ENCODE measurements at regions of chr7 and their contacts with region 1.

Region 1: DNA sequence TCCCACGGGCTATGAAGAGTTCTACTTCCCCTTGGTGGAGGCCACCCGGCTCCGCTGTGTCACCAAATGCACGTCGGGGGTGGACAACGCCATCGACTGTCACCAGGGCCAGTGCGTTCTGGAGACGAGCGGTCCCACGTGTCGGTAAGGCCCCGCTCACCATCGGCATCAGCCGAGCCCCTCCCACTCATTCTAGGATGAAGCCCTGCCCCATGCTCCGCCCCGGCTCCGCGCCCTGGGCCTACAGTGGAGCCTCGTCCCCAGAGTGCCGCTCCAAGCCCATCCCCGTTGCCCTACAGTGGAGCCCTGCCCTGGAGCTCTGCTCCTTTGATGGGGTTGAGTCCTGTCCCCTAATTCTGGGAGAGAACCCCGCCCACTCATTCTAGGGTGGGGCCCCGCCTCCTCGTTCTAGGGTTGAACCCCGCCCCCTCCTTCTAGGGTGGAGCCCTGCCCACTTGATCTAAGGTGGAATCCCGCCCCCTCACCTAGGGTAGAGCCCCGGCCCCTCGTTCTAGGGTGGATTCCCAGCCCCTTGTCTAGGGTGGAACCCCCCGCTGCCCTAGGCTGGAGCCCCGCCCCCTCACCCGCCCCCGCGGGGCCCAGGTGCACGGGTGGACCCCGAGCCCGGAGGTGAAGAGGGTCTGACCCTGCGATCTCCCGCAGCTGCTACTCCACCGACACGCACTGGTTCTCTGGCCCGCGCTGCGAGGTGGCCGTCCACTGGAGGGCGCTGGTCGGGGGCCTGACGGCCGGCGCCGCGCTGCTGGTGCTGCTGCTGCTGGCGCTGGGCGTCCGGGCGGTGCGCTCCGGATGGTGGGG is 3.4 kb upstream of the MUC12 start:
- DNase-seq: peak; percentile 64
- H3K4me3 Mint-ChIP-seq: peak overlapping the region; percentile 70
- H3K27ac Mint-ChIP-seq: no peak overlapping the region
- H3K4me1 Mint-ChIP-seq: peaks cover 8% of the 10 kb centered on the region
- H3K27me3 Mint-ChIP-seq: peaks cover 48% of the 10 kb centered on the region

Region 2: GRCh38 chr7:100803398-100804233 is 162.3 kb before region 1 on chr7:
- intact Hi-C with region 1: loop called (anchors 5 kb)
- DNase-seq: peak; percentile 42
- H3K4me3 Mint-ChIP-seq: no peak overlapping the region
- H3K27ac Mint-ChIP-seq: peak overlapping the region; percentile 71
- H3K4me1 Mint-ChIP-seq: peaks cover 10% of the 10 kb centered on the region
- H3K27me3 Mint-ChIP-seq: peaks cover 13% of the 10 kb centered on the region

Region 3: GRCh38 chr7:100889761-100890634 is 75.9 kb before region 1 on chr7:
- intact Hi-C with region 1: loop called (anchors 5 kb)
- DNase-seq: peak; percentile 91
- H3K4me3 Mint-ChIP-seq: peak overlapping the region; percentile 82
- H3K27ac Mint-ChIP-seq: peak overlapping the region; percentile 67
- H3K4me1 Mint-ChIP-seq: peaks cover 42% of the 10 kb centered on the region
- H3K27me3 Mint-ChIP-seq: peaks cover 23% of the 10 kb centered on the region

Region 4: GRCh38 chr7:101017064-101017777 is 51.3 kb after region 1 on chr7:
- intact Hi-C with region 1: loop called (anchors 2 kb)
- DNase-seq: peak; percentile 65
- H3K4me3 Mint-ChIP-seq: peak overlapping the region; percentile 85
- H3K27ac Mint-ChIP-seq: peak overlapping the region; percentile 88
- H3K4me1 Mint-ChIP-seq: peaks cover 21% of the 10 kb centered on the region
- H3K27me3 Mint-ChIP-seq: peaks cover 14% of the 10 kb centered on the region

Region 5: GRCh38 chr7:101058355-101058754 is 92.4 kb after region 1 on chr7:
- intact Hi-C with region 1: loop called (anchors 1 kb)
- DNase-seq: peak; percentile 38
- H3K4me3 Mint-ChIP-seq: no peak overlapping the region
- H3K27ac Mint-ChIP-seq: no peak overlapping the region
- H3K4me1 Mint-ChIP-seq: peaks cover 7% of the 10 kb centered on the region
- H3K27me3 Mint-ChIP-seq: peaks cover 24% of the 10 kb centered on the region

Region 6: DNA sequence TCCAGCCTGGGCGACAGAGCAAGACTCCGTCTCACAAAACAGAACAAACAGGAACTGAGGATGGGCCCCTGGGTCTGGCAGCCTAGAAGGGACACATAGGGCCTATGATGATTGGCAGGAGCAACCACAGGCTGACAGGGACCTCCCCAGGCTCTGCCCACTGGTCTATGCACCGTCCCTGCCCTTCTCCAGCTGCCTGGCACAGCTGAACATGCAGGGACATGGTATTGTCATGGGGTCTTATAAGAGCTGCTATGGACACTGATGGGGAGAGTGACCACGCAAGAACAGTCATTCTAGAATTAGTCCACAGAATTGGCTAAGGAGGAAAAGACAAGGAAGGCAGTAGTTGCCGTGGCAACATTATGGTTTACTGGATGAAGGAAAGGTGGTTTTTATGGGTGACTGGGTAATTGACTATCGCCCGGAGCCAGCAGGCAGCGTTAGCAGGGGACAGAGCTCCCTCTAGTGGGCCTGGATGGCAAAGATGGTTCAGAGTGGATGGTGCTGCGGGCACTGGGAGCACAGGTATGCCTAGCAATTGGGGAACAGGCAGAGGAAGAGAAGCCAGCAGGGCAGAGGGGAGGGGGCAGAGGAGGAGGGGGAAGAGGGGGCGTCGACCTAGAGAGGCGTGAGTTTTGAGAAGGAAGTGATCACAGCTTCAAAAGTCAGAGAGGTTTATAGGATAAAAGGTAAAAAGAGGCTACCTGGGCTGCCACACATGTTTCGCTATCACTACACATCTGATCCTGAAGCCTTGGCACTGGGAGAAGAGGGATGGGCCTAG is 111.6 kb after region 1 on chr7:
- intact Hi-C with region 1: loop called (anchors 1 kb)
- DNase-seq: peak; percentile 73
- H3K4me3 Mint-ChIP-seq: no peak overlapping the region
- H3K27ac Mint-ChIP-seq: no peak overlapping the region
- H3K4me1 Mint-ChIP-seq: peaks cover 7% of the 10 kb centered on the region
- H3K27me3 Mint-ChIP-seq: peaks cover 9% of the 10 kb centered on the region

Region 7: GRCh38 chr7:101165075-101165957 is 199.4 kb after region 1 on chr7 and contains the start of gene VGF:
- intact Hi-C with region 1: loop called (anchors 10 kb)
- DNase-seq: peak; percentile 92
- H3K4me3 Mint-ChIP-seq: peak within 1 kb of the TSS; percentile 85
- H3K27ac Mint-ChIP-seq: peak within 1 kb of the TSS; percentile 82
- H3K4me1 Mint-ChIP-seq: peaks cover 52% of the 10 kb centered on the region
- H3K27me3 Mint-ChIP-seq: peaks cover 61% of the 10 kb centered on the region
- total RNA-seq, gene VGF: 0.10 and 0.21 TPM in 2 replicates